ENCODE measurements at regions of chr20 and their contacts with region 1.

Region 1: DNA sequence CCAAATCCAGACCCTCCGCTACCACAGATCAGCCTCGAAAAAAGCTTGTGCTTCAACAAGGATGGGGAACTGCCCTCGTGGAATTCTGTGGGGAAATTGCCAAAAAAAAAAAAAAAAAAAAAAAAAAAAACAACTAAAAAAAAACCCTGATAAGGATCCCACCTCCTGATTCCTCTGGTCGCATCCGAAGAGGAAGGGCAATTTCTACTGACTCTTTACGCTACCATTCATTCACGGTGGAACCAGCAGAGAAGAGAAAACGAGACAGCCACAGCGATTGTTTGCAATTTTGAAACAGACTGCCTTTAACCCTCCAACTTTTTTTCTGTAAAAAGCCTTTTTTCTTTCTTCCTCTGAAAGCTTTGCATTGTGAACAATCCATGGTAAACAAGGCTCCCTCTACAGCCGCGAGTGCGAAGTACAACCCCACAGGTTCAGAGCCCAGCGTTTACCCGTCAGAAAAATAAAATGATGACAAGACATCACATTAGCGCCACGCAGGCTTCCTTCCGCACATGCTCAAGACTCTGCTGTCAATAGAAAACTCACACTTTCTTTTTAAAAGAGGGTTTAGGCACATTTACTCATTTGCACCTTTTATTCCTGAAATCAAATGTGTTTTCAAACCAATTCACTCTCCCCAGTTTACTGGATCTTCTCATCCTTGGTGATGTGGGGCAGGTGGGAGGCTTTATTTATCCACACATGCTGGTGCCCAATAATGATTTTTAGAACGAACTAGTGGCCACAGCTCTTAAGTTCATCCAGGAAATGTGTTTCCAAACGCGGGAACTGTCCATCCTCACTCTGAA is 100.0 kb downstream of the NOL4L start:
- DNase-seq: peak; percentile 72
- H3K4me3 Mint-ChIP-seq: peak overlapping the region; percentile 89
- H3K27ac Mint-ChIP-seq: peak overlapping the region; percentile 85
- H3K4me1 Mint-ChIP-seq: peaks cover 21% of the 10 kb centered on the region
- H3K27me3 Mint-ChIP-seq: peaks cover 7% of the 10 kb centered on the region

Region 2: GRCh38 chr20:32155017-32155981 is 329.9 kb before region 1 on chr20:
- intact Hi-C with region 1: loop called (anchors 10 kb)
- DNase-seq: no peak
- H3K4me3 Mint-ChIP-seq: no peak overlapping the region
- H3K27ac Mint-ChIP-seq: peak overlapping the region; percentile 59
- H3K4me1 Mint-ChIP-seq: peaks cover 5% of the 10 kb centered on the region
- H3K27me3 Mint-ChIP-seq: no peaks in the 10 kb centered on the region

Region 3: DNA sequence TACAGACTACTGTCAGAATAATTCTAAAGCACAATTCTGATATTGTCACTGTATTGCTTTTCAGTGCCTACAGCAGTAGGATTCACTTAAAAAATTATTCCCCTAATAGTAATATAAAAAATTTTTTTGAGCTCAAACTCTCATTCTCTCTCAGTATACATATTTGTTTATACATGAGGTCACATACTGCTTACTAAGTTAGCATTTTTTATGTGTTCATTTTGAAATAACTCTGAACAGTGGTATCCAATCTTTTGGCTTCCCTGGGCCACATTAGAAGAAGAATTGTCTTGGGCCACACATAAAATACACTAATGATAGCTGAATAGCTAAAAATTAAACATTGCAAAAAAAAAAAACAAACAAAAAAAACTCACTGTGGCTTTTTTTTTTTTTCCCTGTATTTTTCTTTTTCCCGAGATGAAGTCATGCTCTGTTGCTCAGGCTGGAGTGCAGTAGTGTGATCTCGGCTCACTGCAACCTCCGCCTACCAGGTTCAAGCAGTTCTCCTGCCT is 88.5 kb before region 1 on chr20:
- intact Hi-C with region 1: no loop called
- DNase-seq: no peak
- H3K4me3 Mint-ChIP-seq: no peak overlapping the region
- H3K27ac Mint-ChIP-seq: no peak overlapping the region
- H3K4me1 Mint-ChIP-seq: peaks cover 21% of the 10 kb centered on the region
- H3K27me3 Mint-ChIP-seq: no peaks in the 10 kb centered on the region

Region 4: DNA sequence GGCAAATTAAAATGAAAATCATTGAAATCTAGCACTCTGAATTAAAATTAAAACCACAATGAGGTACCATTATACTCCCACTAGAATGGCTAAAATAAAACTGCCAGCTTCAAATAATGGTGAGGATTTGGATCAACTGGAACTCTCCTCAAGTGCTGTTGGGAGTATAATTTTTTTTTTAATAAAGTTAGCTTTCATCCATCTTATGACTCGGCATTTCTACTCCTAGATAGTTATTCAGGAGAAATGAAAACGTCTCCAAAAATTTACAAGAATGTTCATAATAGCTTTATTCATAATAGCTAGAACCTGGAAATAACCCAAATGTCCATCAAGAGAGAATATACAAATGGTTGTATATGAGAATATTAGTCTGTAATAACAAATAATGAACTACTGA is 63.9 kb before region 1 on chr20:
- intact Hi-C with region 1: no loop called
- DNase-seq: no peak
- H3K4me3 Mint-ChIP-seq: no peak overlapping the region
- H3K27ac Mint-ChIP-seq: no peak overlapping the region
- H3K4me1 Mint-ChIP-seq: peaks cover 11% of the 10 kb centered on the region
- H3K27me3 Mint-ChIP-seq: no peaks in the 10 kb centered on the region

Region 5: DNA sequence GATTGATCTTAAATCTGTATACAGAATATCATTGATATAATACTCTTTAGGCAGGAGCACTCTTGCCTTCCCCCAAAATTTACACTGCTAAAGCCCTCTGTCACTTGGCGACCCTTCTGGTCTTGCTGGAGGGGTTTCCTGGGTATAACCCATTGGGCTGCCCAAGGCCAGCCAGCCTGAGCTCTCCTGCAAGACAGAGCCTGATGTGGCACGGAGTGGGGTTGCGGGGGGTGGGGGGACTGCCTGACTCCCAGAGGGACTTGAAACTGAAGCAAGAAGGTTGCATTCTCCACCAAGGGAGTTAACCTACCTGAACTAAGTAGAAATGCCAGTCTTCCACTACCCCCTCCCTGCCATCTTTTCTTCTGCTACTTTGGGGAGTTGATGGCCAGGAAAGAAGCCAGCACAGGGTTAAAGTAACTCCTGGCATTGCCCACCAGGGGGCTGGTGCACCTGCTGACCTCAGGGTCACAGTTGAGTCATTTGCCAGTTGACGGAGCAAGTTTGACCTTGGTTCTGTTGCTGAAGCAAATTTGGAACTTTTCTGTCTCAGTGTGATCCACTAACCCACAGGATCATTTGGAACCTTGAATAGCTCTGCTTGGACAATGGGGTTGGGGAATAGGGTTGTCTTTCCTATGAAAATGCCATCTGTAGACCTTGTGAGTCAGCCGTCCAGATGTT is 47.6 kb before region 1 on chr20:
- intact Hi-C with region 1: loop called (anchors 1 kb)
- DNase-seq: no peak
- H3K4me3 Mint-ChIP-seq: no peak overlapping the region
- H3K27ac Mint-ChIP-seq: no peak overlapping the region
- H3K4me1 Mint-ChIP-seq: peaks cover 14% of the 10 kb centered on the region
- H3K27me3 Mint-ChIP-seq: no peaks in the 10 kb centered on the region

Region 6: GRCh38 chr20:32497589-32498224 is 12.5 kb after region 1 on chr20:
- intact Hi-C with region 1: no loop called
- DNase-seq: no peak
- H3K4me3 Mint-ChIP-seq: no peak overlapping the region
- H3K27ac Mint-ChIP-seq: no peak overlapping the region
- H3K4me1 Mint-ChIP-seq: no peaks in the 10 kb centered on the region
- H3K27me3 Mint-ChIP-seq: no peaks in the 10 kb centered on the region

Region 7: DNA sequence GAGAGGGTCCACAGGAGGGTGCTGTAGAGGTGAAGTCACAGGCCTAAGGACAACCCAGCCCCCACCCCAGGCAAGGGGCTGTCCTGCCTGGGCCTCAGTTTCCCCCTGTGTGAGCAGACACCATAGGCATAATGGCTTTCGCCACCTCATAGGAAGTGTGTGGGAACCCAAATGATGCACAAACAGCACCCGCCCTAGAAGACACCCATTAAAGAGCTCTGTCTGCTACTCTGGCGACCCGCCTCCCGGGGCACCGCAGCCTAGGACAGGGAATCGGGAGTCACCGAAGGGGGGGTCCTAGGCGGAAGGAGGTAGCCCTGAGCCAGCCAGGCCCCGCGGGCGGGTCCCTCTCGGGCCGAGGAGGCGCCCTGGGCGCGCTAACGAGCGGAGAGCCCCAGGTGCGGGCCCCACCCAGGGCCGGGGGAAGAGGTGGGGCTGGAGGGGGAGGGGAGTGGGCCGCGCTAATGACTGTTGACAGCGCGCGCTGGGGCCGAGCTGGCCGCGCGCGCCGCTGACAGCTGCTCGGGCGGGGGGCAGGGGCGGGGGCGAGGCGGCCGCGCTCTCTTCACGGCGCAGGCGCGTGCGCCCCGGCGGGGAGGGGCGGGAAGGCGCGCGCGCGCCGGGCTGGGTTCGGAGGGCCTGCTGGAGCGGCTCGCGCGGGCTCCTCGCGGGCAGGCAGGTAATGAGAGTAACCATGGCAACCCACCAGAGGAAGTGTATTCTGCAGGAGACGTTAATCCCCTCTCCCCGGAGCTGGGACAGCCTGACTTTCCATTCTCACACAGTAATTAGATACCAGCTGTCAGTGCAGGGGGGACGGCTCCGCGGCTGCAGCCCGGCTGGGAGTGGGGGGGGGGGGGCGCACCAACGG is 51.0 kb after region 1 on chr20:
- intact Hi-C with region 1: loop called (anchors 2 kb)
- DNase-seq: peak; percentile 76
- H3K4me3 Mint-ChIP-seq: peak overlapping the region; percentile 76
- H3K27ac Mint-ChIP-seq: peak overlapping the region; percentile 90
- H3K4me1 Mint-ChIP-seq: peaks cover 84% of the 10 kb centered on the region
- H3K27me3 Mint-ChIP-seq: no peaks in the 10 kb centered on the region